ENCODE measurements at regions of chr18 and their contacts with region 1.

Region 1: GRCh38 chr18:59459369-59460079 is 100.5 kb upstream of the LMAN1 start:
- DNase-seq: no peak
- H3K4me3 ChIP-seq: no peak overlapping the region
- CTCF ChIP-seq: peak; percentile 23

Region 2: DNA sequence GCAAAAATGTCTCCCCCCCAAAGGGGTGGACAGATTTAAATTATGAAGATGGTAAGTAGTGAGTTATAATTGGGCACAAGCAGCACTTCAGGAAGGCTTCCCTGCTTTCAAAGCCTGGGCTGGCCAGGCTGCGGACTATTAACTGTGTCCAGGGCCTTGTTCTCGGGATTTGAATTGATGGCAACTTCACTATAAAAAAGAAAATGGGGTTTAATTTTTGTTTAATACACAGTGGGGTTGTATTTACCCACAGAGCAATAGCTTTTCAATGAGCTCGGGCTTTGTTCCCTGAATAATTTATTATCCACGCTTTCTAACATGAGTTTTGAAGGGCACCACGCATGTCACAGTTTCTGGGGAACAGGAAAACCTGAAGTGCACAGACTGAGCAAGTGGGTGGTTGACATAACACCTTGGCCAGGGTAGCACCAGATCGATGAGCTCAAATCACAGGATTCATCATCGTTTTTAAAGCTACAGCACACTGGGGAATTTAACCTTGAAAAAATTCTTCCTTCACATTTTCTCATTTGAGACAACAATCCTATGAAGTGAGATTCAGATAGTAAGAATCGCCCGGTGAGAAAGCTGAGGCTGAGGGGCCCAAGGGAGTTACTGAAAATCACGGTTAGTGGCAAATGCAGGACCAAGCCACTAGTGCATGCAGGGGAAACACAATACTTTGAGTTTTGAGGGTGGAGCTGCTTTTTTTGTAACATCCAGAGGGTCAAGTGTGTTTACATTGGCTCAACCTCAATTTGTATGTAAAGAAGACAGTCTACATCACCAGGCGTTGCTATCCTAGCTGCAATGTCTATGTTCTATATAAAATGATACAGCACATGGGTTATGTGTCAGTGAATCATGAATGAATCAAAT is 71.6 kb before region 1 on chr18:
- CTCF ChIA-PET with region 1: no interaction called
- POLR2A ChIA-PET with region 1: no interaction called
- DNase-seq: no peak
- H3K4me3 ChIP-seq: no peak overlapping the region
- CTCF ChIP-seq: no peak

Region 3: DNA sequence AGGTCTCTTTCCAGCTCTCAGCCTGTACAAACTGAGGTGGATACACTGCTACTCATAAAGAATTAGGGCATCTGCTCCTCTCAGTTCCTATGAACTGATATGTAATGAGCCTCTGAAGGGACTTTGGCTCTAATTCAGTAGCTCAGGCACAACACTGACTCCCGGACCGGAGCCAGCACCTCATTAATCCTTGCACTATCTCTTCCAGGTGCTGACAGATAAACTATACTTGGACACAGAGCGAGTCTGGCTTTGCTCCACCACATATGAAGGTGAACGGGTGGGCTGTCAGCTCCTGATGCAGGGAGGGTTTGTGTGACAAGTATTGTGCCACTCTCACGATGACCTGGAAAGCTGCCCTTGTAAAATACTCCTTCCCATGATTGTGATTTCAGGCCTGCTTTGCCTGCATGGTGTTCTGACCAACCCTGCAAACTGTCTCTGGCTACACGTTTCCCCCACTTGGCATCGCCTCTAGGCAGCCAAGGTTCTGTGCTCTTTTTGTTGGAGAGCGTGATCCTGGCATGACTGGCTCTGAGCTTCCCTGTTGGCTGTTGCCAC is 11.1 kb after region 1 on chr18:
- CTCF ChIA-PET with region 1: interaction called, 28 read pairs
- POLR2A ChIA-PET with region 1: no interaction called
- DNase-seq: no peak
- H3K4me3 ChIP-seq: no peak overlapping the region
- CTCF ChIP-seq: no peak

Region 4: GRCh38 chr18:59566533-59566971 is 107.0 kb after region 1 on chr18:
- CTCF ChIA-PET with region 1: interaction called, 19 read pairs
- POLR2A ChIA-PET with region 1: no interaction called
- DNase-seq: peak; percentile 33
- H3K4me3 ChIP-seq: no peak overlapping the region
- CTCF ChIP-seq: no peak

Region 5: DNA sequence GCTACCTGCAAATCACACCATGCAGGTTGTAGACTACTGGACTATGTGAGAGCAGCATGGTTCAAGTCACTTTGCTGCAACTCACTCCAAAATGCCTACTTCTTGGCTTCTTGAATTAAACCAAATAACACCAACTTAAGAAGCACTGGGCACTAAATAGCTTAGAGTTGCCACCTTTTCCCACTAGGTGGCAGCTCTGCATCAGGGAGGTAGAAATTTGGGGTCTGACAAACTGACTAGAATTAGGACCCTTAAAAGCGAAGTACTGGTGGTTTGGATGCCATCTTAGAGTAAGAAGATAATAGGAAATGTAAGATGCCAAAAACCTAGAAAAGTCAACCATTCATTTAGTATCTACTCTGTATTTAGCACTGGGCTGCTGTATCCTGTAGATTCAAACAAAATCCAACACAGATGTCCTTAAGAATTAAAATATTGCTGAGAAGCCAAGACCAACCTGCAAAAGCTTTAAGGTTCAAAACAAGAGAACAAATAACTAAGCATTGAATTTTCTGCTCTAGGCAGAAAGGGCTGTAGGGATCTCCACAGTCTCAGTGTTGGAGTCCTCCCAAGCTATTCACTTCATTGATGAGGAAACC is 172.2 kb after region 1 on chr18:
- CTCF ChIA-PET with region 1: interaction called, 54 read pairs
- POLR2A ChIA-PET with region 1: no interaction called
- DNase-seq: no peak
- H3K4me3 ChIP-seq: no peak overlapping the region
- CTCF ChIP-seq: peak; percentile 59

Region 6: DNA sequence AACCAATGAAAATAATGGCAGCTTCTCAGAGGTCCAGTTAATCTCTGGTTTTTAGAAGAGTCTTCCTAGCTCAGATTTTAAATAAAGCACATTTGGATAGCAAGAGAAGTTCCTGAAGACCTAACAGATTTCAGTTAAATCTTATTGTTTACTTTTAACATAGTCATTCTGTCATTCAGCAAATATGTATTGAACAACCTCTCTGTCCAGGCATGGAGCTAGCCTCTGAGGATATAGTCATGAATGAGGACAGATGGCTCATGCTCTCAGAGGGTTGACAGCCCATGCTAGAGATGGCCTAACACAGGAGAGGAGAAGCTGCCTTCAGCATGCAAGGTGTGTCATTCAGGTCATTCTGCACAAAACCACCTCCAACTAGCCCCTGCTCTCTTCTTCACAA is 231.5 kb after region 1 on chr18:
- CTCF ChIA-PET with region 1: interaction called, 55 read pairs
- POLR2A ChIA-PET with region 1: no interaction called
- DNase-seq: no peak
- H3K4me3 ChIP-seq: no peak overlapping the region
- CTCF ChIP-seq: no peak

Region 7: GRCh38 chr18:60090170-60090569 is 630.6 kb after region 1 on chr18:
- CTCF ChIA-PET with region 1: no interaction called
- POLR2A ChIA-PET with region 1: no interaction called
- DNase-seq: no peak
- H3K4me3 ChIP-seq: no peak overlapping the region
- CTCF ChIP-seq: no peak